ENCODE measurements at regions of chr14 and their contacts with region 1.

Region 1: GRCh38 chr14:31026395-31027118 is 378 bp upstream of the STRN3 start:
- DNase-seq: peak; percentile 90

Region 2: DNA sequence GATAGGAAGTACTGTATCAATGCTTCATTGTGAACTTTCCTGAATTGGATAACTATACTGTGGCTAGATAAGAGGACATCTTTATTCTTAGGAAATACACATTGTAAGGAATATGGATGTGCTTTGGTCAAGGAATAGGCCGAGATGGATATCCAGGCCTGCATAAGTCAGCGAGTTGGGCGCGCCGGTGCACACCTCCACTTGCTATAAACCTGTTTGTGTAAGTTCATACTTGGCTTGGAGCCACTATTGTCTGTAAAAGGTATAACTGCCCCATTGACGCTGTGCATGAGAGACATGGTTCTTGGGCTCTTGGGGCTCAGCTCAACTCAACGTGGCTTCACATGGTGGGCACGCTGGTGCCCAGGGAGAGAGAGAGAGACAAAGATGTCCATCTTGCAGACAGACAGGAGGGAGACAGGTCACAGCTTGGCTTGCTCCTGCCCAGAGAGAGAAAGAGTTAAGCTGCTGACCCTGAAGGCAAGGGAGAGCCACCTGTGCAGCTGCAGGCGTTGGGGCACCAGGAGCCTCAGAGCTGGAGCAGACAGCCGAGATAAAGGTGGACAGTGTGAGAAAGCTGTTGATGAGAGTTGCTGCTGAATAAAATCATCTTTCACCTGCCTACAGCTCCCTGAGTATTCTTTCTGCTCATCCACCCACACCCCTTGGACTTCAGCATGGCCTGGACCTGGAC is 186.3 kb before region 1 on chr14:
- CTCF ChIA-PET with region 1: no interaction called
- POLR2A ChIA-PET with region 1: no interaction called
- DNase-seq: no peak

Region 3: DNA sequence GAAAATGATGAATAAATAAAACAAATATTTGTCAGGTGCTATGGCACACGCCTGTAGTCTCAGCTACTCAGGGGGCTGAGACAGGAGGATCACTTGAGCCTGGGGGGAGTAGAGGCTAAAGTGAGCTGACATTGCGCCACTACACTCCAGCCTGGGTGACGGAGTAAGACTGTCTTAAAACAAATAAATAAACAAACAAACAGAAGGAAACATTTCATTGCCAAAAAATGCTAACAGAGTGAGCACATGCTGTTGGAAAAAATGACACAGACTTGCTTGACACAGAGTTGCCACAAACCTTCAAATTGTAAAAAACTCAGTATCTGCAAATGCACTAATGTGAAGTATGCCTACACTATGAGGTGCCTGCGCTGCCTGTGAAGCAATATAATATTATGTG is 51.9 kb before region 1 on chr14:
- CTCF ChIA-PET with region 1: no interaction called
- POLR2A ChIA-PET with region 1: no interaction called
- DNase-seq: no peak

Region 4: DNA sequence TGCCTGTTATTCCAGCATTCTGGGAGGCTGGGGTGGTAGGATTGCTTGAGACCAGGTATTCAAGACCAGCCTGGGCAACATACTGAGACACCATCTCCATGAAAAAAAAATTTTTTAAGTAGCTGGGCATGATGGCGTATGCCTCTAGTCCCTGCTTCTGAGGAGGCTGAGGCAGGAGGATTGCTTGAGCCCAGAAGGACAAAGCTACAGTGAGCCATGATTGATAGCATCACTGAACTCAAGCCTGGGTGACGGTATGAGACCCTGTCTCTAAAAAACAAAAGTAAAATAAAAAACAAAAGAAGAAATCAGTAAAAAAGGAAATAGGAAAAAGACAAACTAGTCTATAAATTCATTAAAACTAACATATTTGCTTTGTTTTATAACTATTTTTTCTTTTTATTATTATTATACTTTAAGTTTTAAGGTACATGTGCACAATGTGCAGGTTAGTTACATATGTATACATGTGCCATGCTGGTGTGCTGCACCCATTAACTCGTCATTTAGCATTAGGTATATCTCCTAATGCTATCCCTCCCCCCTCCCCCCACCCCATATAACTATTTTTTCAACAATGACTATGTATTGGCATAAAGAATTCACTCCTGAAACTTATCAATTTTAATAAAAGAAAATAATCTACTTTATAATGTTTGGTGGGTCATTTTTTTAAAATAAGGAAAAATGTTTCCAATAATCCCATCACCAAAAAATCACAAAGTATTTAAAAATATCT is 16.6 kb before region 1 on chr14:
- CTCF ChIA-PET with region 1: no interaction called
- POLR2A ChIA-PET with region 1: interaction called, 10 read pairs
- DNase-seq: no peak

Region 5: GRCh38 chr14:31038521-31039166 is 12.1 kb after region 1 on chr14:
- CTCF ChIA-PET with region 1: interaction called, 3 read pairs
- POLR2A ChIA-PET with region 1: interaction called, 11 read pairs
- DNase-seq: no peak